A549 (cell line): ENCODE measurements at regions of chr12 and their contacts with region 1.

Region 1: GRCh38 chr12:68317047-68317667 is 15.0 kb downstream of the MDM1 start:
- DNase-seq: peak; percentile 31 to 56
- ATAC-seq: 0 out of 6 replicates have a peak, but pooled peaks of 1 of the 2 experiments have one; percentile 40
- H3K4me3 ChIP-seq: no peak overlapping the region
- H3K27ac ChIP-seq: no peak overlapping the region
- H3K4me1 ChIP-seq: no peaks in the 10 kb centered on the region
- CTCF ChIP-seq: peak; percentile 82
- EP300 ChIP-seq: no peak
- POLR2A ChIP-seq: no peak
- RAD21 ChIP-seq: peak; percentile 58 to 66

Region 2: DNA sequence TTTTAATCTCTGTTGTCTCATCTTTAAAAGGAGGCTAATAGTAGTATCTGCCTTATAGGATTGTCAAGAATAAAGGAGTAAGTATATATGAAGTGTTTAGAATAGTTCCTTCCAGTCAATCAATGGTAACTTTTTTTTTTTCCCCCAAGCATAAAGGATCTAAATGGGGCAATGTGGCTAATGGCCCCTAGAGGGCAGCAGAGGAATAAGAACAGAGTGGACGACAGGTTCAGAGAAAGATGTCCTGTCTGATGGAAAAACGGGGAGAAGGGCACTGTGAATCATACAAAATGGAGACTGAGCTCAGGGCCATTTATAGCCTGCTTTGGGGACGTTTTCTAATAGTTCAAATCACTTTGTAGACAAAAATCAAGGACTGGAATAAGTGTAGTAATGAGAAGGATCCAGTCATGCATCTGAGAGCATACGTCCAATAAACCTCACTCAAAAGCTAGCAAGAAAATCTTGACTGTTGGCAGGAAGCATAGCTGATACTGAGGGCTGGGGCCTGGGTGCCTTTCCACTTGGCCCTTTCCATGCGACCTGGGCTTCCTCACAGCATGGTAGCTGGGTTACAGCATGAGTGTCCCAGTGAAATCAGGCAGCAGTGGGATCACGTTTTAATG is 276.6 kb before region 1 on chr12:
- CTCF ChIA-PET with region 1: interaction called, 16 read pairs
- POLR2A ChIA-PET with region 1: no interaction called
- DNase-seq: peak; percentile 67 to 76
- ATAC-seq: peak; percentile 93 to 95
- H3K4me3 ChIP-seq: no peak overlapping the region
- H3K27ac ChIP-seq: no peak overlapping the region
- H3K4me1 ChIP-seq: no peaks in the 10 kb centered on the region
- CTCF ChIP-seq: peak; percentile 87
- EP300 ChIP-seq: no peak
- POLR2A ChIP-seq: no peak
- RAD21 ChIP-seq: peak; percentile 75 to 86

Region 3: DNA sequence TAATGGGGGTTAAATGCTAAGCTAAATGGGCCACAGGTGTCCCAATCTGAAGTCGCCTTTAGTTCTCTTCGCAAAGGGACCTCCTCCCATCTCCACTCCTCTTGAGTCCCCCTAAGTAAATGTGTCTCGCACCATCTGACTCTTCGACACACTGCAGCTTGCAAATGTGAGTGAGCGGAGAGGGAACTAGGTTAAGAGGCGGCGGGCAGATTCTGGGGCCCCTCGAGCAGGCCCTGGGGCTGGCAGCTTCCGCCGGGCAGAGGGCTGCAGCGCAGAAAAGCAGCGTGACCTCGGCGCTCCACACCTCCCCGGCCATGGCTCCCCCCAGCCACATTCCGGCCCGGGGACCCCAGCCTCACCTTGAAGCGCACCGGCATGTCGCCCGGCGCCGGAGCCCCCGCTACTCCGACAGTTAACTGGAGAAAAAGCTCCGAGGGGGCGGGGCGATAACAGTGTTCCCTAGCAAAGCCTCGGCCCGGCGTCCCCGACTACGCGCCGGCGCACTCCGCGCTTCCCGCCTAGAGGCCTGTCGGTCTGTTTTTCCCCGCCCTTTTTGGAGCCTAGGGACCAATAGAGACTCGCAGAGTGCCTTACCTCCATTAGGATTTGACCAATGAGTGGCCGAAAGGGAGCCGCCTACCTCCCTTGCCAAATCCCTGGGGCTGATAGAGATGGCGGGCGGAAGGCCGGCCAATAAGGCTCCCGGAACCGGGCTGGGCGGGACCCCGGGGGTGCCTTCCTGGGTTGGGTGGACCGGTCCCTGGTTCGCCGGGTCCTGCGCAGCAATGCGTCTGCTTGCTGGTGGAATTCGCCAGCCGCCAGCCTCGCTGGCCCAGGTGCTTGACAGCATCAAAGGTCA is 14.9 kb after region 1 on chr12 and contains the start of gene MDM1:
- CTCF ChIA-PET with region 1: interaction called, 10 read pairs
- POLR2A ChIA-PET with region 1: no interaction called
- DNase-seq: peak; percentile 97
- ATAC-seq: peak; percentile 99
- H3K4me3 ChIP-seq: peak within 1 kb of the TSS; percentile 85
- H3K27ac ChIP-seq: peak within 1 kb of the TSS; percentile 79 to 89
- H3K4me1 ChIP-seq: peaks cover 19% of the 10 kb centered on the region
- CTCF ChIP-seq: no peak
- EP300 ChIP-seq: no peak
- POLR2A ChIP-seq: peak; percentile 88
- RAD21 ChIP-seq: no peak
- polyA plus RNA-seq, gene MDM1: 17.5 and 24.5 TPM in 2 replicates

Region 4: DNA sequence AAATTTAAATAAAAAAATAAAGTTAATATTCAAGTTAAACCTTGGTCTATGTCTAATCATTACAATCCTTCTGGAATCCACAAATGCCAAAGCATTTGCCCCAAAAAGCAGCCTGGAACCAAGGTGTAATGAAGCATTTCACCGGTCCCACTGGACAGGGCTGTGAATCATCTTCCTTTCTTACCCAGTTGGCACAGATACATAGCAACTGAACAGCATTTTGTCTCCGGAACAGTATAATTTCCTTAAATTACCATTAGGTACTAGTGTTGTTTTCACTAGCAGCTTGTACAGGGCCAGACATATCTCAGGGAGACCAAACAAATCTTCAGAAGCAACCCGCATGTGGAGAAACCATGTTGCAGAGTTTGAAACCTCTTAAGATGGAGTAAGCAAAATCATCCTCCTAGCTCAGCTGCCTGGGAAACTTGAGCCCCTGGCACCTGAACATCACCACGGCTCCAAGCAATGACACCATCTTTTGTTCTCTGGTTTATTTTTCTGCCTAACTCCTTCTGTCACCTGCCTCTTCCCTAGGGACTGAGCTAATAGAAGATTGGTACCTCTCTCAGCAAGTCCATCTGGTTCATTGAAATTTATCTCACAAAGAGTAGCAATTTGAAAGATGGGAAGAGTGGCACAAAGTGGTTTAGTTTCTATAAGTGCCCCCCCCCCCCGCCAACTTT is 32.9 kb after region 1 on chr12:
- CTCF ChIA-PET with region 1: no interaction called
- POLR2A ChIA-PET with region 1: no interaction called
- DNase-seq: no peak
- ATAC-seq: no peak
- H3K4me3 ChIP-seq: no peak overlapping the region
- H3K27ac ChIP-seq: no peak overlapping the region
- H3K4me1 ChIP-seq: peaks cover 15% of the 10 kb centered on the region; the same call in 2 of the 3 replicates
- CTCF ChIP-seq: no peak
- EP300 ChIP-seq: no peak
- POLR2A ChIP-seq: no peak
- RAD21 ChIP-seq: no peak

Region 5: GRCh38 chr12:68406134-68406594 is 89.0 kb after region 1 on chr12:
- CTCF ChIA-PET with region 1: no interaction called
- POLR2A ChIA-PET with region 1: no interaction called
- DNase-seq: peak; percentile 25 to 59
- ATAC-seq: peak; percentile 92 to 95
- H3K4me3 ChIP-seq: no peak overlapping the region
- H3K27ac ChIP-seq: peak overlapping the region; percentile 53 to 54
- H3K4me1 ChIP-seq: peaks cover 19% of the 10 kb centered on the region
- CTCF ChIP-seq: no peak
- EP300 ChIP-seq: no peak
- POLR2A ChIP-seq: no peak
- RAD21 ChIP-seq: 0 out of 5 replicates have a peak, but pooled peaks have one; percentile 19 to 20